Mucosa of descending colon (tissue), 3 donors: ENCODE measurements at regions of chr14 and their contacts with region 1.

Region 1: DNA sequence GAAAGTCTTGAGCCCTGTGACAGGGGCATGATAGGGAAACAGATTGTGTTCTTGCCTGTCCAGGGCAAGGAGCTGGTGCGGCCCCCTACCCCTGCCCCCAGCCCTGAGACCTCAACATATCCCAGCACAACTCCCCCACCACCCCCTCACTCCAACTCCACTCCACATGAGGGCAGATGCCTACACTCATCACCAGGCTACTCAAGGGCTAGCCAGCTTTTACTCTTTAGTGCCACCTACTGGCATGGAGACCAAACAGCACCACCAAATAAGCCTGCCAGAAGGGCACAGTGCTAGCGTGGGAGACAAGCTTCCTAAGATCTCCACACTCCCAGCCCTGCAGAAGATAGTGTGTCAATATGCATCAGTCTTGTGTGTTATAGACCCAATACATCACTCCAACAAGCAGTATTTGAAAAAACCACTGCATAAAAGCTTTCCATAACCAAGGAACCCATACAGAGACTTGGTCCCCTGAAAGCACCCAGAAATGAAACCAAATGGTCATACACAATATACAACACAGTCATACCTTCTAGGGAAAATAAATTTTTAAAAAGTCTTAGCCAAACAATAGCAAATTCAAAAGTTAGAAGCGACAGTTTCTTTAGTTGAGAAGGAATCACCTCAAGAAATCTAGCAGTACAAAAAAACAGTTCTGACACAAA is 154.4 kb downstream of the KCNK10 start:
- DNase-seq: peak in 1 of 3 donors; percentile 69
- ATAC-seq: peak; percentile 89
- H3K4me3 ChIP-seq: no peak overlapping the region
- H3K4me1 ChIP-seq: no peaks in the 10 kb centered on the region
- CTCF ChIP-seq: peak; percentile 44

Region 2: GRCh38 chr14:87944987-87945604 is 223.5 kb before region 1 on chr14:
- intact Hi-C with region 1: loop called in 1 of 2 experiments (anchors 10 kb)
- DNase-seq: no peak
- ATAC-seq: peak; percentile 51
- H3K4me3 ChIP-seq: no peak overlapping the region
- H3K4me1 ChIP-seq: no peaks in the 10 kb centered on the region
- CTCF ChIP-seq: peak; percentile 18

Region 3: DNA sequence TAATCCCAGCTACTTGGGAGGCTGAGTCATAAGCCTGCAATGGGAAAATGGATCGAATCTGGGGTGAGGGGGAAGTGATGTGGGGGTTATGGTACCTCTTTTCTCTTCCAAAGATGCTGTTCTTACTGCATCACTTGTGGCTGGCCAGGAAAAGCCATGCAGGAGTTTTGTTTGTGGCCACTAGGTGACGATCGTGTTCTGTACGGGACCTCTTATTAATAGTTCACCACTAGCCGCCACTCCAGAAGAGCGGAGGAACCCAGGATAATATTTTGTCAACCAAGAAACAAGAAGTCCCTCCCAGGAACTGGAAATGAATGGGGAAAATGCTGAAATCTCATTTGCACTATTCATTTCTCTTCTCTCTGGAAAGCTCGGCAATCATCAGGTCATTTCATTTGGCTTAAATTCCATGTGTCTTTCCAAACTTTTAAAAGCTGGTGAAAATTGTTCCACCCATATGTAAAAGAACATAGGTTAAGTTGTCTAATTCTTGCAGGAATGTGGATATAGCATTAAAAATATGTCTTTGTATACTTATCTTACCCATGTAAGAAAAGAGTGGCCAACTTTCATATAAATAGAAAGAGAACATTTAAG is 154.8 kb before region 1 on chr14:
- intact Hi-C with region 1: loop called in 1 of 2 experiments (anchors 2 kb)
- DNase-seq: peak in 2 of 3 donors; percentile 60 to 79
- ATAC-seq: peak; percentile 90
- H3K4me3 ChIP-seq: no peak overlapping the region
- H3K4me1 ChIP-seq: no peaks in the 10 kb centered on the region
- CTCF ChIP-seq: peak; percentile 79

Region 4: GRCh38 chr14:88063845-88064244 is 104.8 kb before region 1 on chr14:
- intact Hi-C with region 1: no loop called
- DNase-seq: no peak
- ATAC-seq: no peak
- H3K4me3 ChIP-seq: no peak overlapping the region
- H3K4me1 ChIP-seq: no peaks in the 10 kb centered on the region
- CTCF ChIP-seq: no peak

Region 5: DNA sequence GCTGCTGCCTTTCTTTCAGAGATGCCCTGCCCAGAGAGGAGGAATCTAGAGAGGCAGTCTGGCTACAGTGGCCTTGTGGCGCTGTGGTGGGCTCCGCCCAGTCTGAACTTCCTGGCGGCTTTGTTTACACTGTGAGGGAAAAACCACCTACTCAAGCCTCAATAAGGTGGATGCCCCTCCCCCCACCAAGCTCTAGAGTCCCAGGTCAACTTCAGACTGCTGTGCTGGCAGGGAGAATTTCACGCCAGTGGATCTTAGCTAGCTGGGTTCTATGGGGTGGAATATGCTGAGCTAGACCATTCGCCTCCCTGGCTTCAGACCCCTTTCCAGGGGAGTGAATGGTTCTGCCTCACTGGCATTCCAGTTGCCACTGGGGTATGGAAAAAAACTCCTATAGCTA is 242.4 kb after region 1 on chr14:
- intact Hi-C with region 1: no loop called
- DNase-seq: no peak
- ATAC-seq: no peak
- H3K4me3 ChIP-seq: no peak overlapping the region
- H3K4me1 ChIP-seq: no peaks in the 10 kb centered on the region
- CTCF ChIP-seq: no peak